Right ventricle myocardium superior (tissue), 1 donor: ENCODE measurements at regions of chr5 and their contacts with region 1.

Region 1: GRCh38 chr5:126676195-126676624 is 75.5 kb downstream of the PHAX start:
- DNase-seq: no peak
- ATAC-seq: peak; percentile 87

Region 2: GRCh38 chr5:126776497-126777256 is 100.5 kb after region 1 on chr5 and contains the start of gene LMNB1:
- intact Hi-C with region 1: loop called (anchors 5 kb)
- DNase-seq: peak; percentile 97
- ATAC-seq: peak; percentile 97
- total RNA-seq, gene LMNB1: 2.6 TPM